B cell (primary cell): ENCODE measurements at regions of chr9 and their contacts with region 1.

Region 1: GRCh38 chr9:110029429-110029955 is 178.5 kb downstream of the C9orf152 start:
- DNase-seq: no peak
- ATAC-seq: no peak
- H3K4me3 ChIP-seq: no peak overlapping the region
- H3K4me3 Mint-ChIP-seq: no peak overlapping the region
- H3K27ac ChIP-seq: no peak overlapping the region
- H3K27ac Mint-ChIP-seq: no peak overlapping the region
- H3K4me1 ChIP-seq: peaks cover 3 to 11% of the 10 kb centered on the region in 2 donors
- H3K4me1 Mint-ChIP-seq: peaks cover 24% of the 10 kb centered on the region
- H3K27me3 ChIP-seq: no peaks in the 10 kb centered on the region
- H3K27me3 Mint-ChIP-seq: no peaks in the 10 kb centered on the region
- CTCF ChIP-seq: no peak

Region 2: GRCh38 chr9:109990541-109990940 is 39.0 kb before region 1 on chr9:
- CTCF ChIA-PET with region 1: no interaction called
- POLR2A ChIA-PET with region 1: no interaction called
- intact Hi-C with region 1: loop called (anchors 5 kb)
- DNase-seq: no peak
- ATAC-seq: no peak
- H3K4me3 ChIP-seq: no peak overlapping the region
- H3K4me3 Mint-ChIP-seq: no peak overlapping the region
- H3K27ac ChIP-seq: no peak overlapping the region
- H3K27ac Mint-ChIP-seq: no peak overlapping the region
- H3K4me1 ChIP-seq: peaks cover 5 to 7% of the 10 kb centered on the region in 2 donors
- H3K4me1 Mint-ChIP-seq: peaks cover 16% of the 10 kb centered on the region
- H3K27me3 ChIP-seq: no peaks in the 10 kb centered on the region
- H3K27me3 Mint-ChIP-seq: no peaks in the 10 kb centered on the region
- CTCF ChIP-seq: no peak

Region 3: DNA sequence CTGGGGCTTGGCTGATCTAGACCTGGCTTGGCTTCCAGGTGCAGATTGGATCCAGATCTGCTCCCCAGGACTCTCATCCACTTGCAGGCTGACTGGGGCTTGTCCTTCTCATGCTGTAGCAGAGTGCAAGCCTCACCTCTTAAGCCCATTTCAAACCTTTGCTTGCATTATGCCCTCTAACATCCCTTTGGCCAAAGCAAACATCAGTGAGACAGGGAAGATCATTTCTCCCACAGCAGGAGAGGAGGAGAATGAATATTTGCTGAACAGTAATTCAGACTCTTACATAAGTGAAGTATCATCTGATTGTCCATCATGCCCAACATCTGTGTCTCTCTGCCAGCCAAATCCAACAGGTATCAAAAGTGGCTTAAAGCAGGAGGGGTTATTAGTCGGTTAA is 16.4 kb before region 1 on chr9:
- CTCF ChIA-PET with region 1: no interaction called
- POLR2A ChIA-PET with region 1: no interaction called
- intact Hi-C with region 1: no loop called
- DNase-seq: no peak
- ATAC-seq: no peak
- H3K4me3 ChIP-seq: no peak overlapping the region
- H3K4me3 Mint-ChIP-seq: no peak overlapping the region
- H3K27ac ChIP-seq: no peak overlapping the region
- H3K27ac Mint-ChIP-seq: peak overlapping the region; percentile 32
- H3K4me1 ChIP-seq: peaks cover under 1 to 5% of the 10 kb centered on the region in 2 donors
- H3K4me1 Mint-ChIP-seq: peaks cover 7% of the 10 kb centered on the region
- H3K27me3 ChIP-seq: no peaks in the 10 kb centered on the region
- H3K27me3 Mint-ChIP-seq: no peaks in the 10 kb centered on the region
- CTCF ChIP-seq: no peak